ENCODE measurements at regions of chr15 and their contacts with region 1.

Region 1: DNA sequence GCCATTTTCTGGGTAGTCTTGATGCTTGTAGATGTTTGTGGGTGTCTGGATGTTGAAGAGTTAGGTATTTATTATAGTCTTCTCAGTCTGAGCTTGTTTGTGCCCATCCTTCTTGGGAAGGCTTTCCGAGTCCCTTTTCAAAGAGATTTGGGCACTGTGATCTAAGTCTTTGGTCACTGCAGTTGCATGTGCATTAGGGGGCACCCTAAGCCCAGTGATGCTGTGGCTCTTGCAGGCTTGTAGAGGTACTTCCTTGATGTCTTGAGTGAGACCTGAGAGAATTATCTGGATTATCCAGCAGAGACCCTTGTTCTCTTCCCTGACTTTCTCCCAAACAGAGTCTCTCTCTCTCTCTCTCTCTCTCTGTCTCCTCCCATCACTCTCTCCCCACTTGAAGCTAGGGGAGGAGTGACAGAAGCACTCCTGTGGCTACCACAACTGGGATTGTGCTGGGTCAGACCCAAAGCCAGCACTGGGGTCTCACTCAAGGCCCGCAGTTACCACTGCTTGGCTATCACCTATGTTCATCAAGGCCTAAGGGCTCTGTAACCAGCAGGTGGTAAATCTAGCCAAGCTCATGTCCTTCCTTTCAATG is 68.5 kb downstream of the TMCO5A start:
- DNase-seq: no peak
- H3K4me3 ChIP-seq: no peak overlapping the region
- H3K27ac ChIP-seq: no peak overlapping the region
- H3K4me1 ChIP-seq: no peaks in the 10 kb centered on the region
- H3K27me3 ChIP-seq: no peaks in the 10 kb centered on the region
- CTCF ChIP-seq: peak in 2 of 3 donors; percentile 53 to 54
- POLR2A ChIP-seq: no peak

Region 2: DNA sequence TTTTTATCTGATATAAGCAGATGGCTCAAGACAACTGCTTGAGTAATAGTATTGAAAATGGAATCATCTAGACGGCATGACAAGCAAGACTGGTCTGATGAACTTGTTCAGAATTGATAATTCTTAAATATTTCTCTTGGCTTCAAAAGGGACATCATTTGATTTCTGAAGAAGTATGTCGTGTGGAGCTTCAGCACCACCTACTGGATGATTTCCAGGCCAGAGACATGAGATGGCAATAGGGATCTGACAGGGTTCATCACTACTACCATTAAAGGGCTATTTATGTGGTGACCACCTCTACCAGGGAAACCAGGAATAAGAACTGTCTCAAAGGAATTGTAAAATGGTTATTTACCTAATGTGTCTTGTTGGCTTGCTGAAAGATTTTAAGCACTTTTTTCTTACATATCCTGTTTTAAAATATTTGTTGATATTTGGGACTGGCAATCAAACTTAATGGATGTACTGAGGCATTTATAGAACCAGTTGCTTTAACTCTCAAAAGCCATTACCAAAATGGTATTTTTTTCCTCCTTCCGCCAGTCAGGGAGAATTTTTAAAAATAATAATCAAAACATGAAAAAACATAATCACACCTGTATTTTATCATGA is 351.4 kb after region 1 on chr15:
- intact Hi-C with region 1: loop called (anchors 10 kb)
- DNase-seq: peak in 1 of 2 donors; percentile 52
- H3K4me3 ChIP-seq: no peak overlapping the region
- H3K27ac ChIP-seq: no peak overlapping the region
- H3K4me1 ChIP-seq: no peaks in the 10 kb centered on the region
- H3K27me3 ChIP-seq: no peaks in the 10 kb centered on the region
- CTCF ChIP-seq: peak in 2 of 3 donors; percentile 64 to 77
- POLR2A ChIP-seq: no peak